ENCODE measurements at regions of chr18 and their contacts with region 1.

Region 1: DNA sequence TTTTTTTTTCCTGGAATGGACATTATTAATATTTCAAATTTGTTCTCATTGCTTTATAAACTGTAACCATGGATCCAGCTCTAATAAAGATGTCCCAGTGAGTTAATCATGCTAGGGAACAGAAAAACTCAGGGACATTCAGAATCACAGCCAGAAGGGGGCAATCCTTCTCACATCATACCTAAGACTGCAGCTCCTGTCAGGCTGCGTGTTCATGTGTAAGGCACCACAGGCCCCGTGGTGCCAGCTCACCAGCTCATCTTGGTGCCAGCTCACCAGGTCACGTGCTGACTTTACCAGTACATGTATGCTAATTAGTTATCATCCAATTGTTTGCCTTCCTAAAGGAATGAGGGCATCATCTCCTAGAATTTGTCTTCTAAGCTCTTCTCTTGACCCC is 84.7 kb upstream of the NEDD4L start:
- DNase-seq: peak; percentile 83
- ATAC-seq: peak; percentile 92
- H3K4me3 ChIP-seq: no peak overlapping the region
- H3K27ac ChIP-seq: no peak overlapping the region
- H3K4me1 ChIP-seq: peaks cover 7% of the 10 kb centered on the region; the same call in 1 of the 2 replicates
- H3K27me3 ChIP-seq: no peaks in the 10 kb centered on the region
- CTCF ChIP-seq: peak; percentile 80

Region 2: GRCh38 chr18:57230861-57231585 is 728.3 kb before region 1 on chr18:
- CTCF ChIA-PET with region 1: no interaction called
- POLR2A ChIA-PET with region 1: interaction called, 22 read pairs
- intact Hi-C with region 1: no loop called
- DNase-seq: peak; percentile 21
- ATAC-seq: no peak
- H3K4me3 ChIP-seq: no peak overlapping the region
- H3K27ac ChIP-seq: no peak overlapping the region
- H3K4me1 ChIP-seq: no peaks in the 10 kb centered on the region
- H3K27me3 ChIP-seq: no peaks in the 10 kb centered on the region
- CTCF ChIP-seq: no peak

Region 3: GRCh38 chr18:57635003-57635822 is 324.1 kb before region 1 on chr18:
- CTCF ChIA-PET with region 1: interaction called, 11 read pairs
- POLR2A ChIA-PET with region 1: no interaction called
- intact Hi-C with region 1: no loop called
- DNase-seq: peak; percentile 73
- ATAC-seq: peak; percentile 65
- H3K4me3 ChIP-seq: peak overlapping the region; percentile 29; the same call in 1 of the 2 replicates
- H3K27ac ChIP-seq: peak overlapping the region; percentile 94
- H3K4me1 ChIP-seq: peaks cover 28% of the 10 kb centered on the region
- H3K27me3 ChIP-seq: no peaks in the 10 kb centered on the region
- CTCF ChIP-seq: no peak

Region 4: DNA sequence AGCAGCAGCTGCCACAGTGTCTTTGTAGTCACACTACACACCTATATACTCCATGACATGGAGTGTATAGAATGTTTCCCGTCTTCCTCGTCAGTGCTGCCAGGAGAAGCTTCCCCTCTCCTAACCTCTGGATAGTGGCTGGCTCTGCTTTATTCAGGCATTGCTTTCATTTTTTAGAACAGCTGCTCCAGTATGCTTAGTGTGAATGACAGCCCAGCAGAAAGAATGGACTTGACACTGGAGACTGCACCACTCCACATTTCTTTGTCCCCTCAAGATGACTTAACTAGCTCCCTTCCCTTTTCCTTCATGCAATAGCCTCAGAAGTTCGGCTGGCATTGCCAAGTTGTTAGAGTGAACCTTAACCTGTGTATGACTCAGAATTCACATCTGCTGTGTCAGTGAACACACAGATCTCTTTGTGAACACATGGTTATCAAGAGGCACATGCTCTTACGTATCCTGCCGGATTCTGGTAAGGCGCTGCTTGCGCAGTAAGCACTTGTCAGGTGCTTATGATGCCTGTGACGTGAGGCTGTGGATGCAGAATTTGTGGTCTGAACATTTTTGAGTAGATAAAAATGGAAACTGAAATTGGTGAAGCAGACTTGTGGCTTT is 158.6 kb after region 1 on chr18:
- CTCF ChIA-PET with region 1: interaction called, 14 read pairs
- POLR2A ChIA-PET with region 1: interaction called, 7 read pairs
- intact Hi-C with region 1: loop called (anchors 1 kb)
- DNase-seq: peak; percentile 93
- ATAC-seq: peak; percentile 84
- H3K4me3 ChIP-seq: no peak overlapping the region
- H3K27ac ChIP-seq: peak overlapping the region; percentile 74
- H3K4me1 ChIP-seq: peaks cover 31% of the 10 kb centered on the region
- H3K27me3 ChIP-seq: no peaks in the 10 kb centered on the region
- CTCF ChIP-seq: no peak

Measured in PC-3 (cell line).